Left lung (tissue), 14 donors: ENCODE measurements at regions of chr7 and their contacts with region 1.

Region 1: DNA sequence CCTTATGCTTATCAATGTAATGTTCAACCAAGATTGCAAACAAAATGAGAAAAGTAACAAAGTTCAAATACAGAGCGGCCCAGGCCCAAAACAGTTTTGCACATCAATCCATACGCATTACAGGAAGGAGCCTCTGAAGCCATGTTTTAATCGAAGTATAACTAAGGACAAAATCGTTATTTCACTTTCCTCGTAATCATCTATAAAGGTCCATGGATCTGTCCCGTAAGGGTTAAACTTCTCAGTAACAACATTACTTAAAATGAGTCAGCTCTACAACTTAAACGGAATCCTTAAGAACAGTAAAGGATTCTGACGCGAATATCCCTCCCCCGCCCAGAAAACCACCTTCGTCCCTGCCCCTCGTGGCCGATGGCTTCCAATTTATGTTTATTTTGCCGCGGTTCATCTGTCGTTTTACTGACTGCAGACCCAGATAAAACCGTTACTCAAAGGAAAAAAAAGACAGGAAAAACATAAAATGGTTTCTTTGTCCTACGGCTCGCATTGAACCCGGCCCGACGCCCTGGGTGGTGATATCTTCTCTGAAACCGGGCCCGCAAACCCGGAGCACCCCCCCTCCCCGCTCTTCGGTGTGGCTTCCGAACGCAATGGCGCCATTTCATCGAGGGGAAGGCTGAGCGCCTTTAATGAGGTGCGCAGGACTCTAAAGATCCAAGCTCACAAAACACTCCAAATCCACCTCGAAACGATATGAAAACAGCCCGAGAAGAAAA is 1.1 kb downstream of the HNRNPA2B1 start:
- DNase-seq: peak; percentile 25 to 87 (median 71)
- ATAC-seq: peak; percentile 10
- H3K4me3 ChIP-seq: peak overlapping the region; percentile 81 to 93
- H3K27ac ChIP-seq: peak overlapping the region; percentile 98 to 100
- H3K4me1 ChIP-seq: peaks cover 37 to 52% of the 10 kb centered on the region in 2 donors
- H3K27me3 ChIP-seq: no peaks in the 10 kb centered on the region
- CTCF ChIP-seq: no peak

Region 2: GRCh38 chr7:25720427-25720826 is 479.0 kb before region 1 on chr7:
- intact Hi-C with region 1: no loop called
- DNase-seq: no peak
- ATAC-seq: no peak
- H3K4me3 ChIP-seq: no peak overlapping the region
- H3K27ac ChIP-seq: no peak overlapping the region
- H3K4me1 ChIP-seq: no peaks in the 10 kb centered on the region
- H3K27me3 ChIP-seq: no peaks in the 10 kb centered on the region
- CTCF ChIP-seq: no peak

Region 3: DNA sequence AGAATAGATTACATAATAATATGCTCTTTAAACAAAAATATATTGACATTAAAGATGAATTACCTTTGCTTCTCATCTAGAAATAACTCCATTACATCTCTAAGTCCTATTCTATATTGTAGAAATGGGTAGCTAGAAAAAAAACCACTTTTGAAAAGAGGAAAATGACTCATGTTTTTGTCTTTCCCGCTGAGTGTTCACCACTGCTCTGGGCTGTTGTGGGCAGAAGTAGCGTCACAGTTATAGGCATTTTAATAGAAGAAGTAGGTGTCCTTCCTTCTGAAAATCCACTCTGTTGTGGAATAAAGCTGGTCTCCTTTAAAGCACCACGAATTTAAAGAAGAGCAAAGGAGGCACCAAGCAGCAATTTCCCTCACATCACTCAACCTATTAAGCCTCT is 165.1 kb before region 1 on chr7:
- intact Hi-C with region 1: no loop called
- DNase-seq: no peak
- ATAC-seq: no peak
- H3K4me3 ChIP-seq: no peak overlapping the region
- H3K27ac ChIP-seq: no peak overlapping the region
- H3K4me1 ChIP-seq: no peaks in the 10 kb centered on the region
- H3K27me3 ChIP-seq: peaks cover 9 to 29% of the 10 kb centered on the region in 2 donors
- CTCF ChIP-seq: no peak

Region 4: DNA sequence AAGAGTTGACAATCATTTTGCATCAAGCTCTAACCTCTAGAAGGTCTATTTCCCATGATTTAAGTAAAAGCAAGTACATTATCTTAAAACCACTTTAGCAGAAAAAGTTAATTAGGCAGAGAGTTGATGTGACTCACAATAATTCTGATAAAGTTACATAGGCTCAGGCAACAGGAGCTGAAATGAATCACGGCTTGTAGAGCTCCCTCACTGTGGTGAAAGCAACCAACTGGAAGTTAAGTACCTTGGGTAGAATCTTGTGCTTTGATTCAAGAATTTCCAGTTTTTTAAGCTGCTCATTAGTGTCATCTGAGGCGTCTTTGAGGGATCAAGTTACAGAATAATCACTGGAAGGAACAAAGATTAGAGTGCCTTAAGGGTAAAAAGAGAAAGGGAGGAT is 116.4 kb before region 1 on chr7:
- intact Hi-C with region 1: loop called in 1 of 2 experiments (anchors 10 kb)
- DNase-seq: peak in 1 of 4 donors; percentile 15
- ATAC-seq: peak; percentile 32
- H3K4me3 ChIP-seq: no peak overlapping the region
- H3K27ac ChIP-seq: no peak overlapping the region
- H3K4me1 ChIP-seq: peaks cover 0 to 10% of the 10 kb centered on the region in 2 donors
- H3K27me3 ChIP-seq: peaks cover 10 to 24% of the 10 kb centered on the region in 2 donors
- CTCF ChIP-seq: no peak

Region 5: DNA sequence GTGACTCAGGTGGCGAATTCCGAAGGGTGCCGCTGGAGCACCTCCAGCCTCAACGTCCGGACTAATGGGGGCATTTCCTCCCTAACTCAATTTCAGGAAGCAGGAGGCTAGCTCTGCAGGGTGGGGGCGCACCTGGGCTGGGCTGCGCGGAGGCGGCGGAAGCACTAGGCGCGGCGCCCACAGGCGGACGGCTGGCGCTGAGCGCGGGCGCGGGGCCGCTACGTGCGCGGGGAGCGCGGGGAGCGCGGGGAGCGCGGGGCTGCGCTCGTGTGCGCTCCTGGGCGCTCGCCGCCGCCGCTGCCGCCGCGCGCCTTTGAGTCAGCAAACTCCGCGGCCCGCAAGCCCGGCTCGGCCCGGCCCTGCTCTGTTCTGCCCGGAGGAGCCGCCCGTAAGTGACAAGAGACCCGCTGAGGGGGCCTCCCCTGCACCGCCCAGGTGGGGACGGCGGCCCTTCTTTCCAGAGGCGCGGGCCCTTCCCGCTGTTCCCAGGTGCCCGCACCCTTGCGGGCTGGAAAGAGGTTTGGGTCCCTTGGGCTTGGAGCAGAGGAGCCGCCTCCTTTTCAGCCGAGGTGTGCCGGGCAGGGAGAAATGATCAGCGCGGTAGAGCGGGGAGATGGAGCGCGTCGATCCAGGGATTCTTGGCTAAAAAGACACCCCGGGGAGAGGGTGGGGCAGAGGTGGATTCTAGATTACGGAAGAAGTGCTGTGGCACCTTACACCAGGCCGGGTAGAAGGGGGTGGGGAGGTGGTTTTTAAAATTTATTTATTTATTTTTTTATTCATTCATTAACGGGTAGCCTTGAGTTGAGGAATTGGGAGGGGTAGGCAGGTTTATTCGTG is 92.5 kb after region 1 on chr7 and contains the start of gene SNX10:
- intact Hi-C with region 1: no loop called
- DNase-seq: peak; percentile 37 to 94 (median 70)
- ATAC-seq: peak; percentile 88
- H3K4me3 ChIP-seq: peak within 1 kb of the TSS; percentile 47 to 55
- H3K27ac ChIP-seq: peak within 1 kb of the TSS; percentile 39 to 86
- H3K4me1 ChIP-seq: peaks cover 0 to 42% of the 10 kb centered on the region in 2 donors
- H3K27me3 ChIP-seq: no peaks in the 10 kb centered on the region
- CTCF ChIP-seq: no peak
- polyA plus RNA-seq, gene SNX10: 7.4 to 11.1 (median 9.3) TPM